Activated naive CD4-positive, alpha-beta T cell treated with anti-CD3 and anti-CD28 coated beads, Interleukin-2, amount 10 ng/mL, durations not matched to agents 7 days and 5 days (primary cell): ENCODE measurements at regions of chr9 and their contacts with region 1.

Region 1: GRCh38 chr9:21812946-21813568 is 10.6 kb downstream of the MTAP start:
- DNase-seq: peak; percentile 74
- H3K4me3 Mint-ChIP-seq: no peak overlapping the region
- H3K27ac Mint-ChIP-seq: peak overlapping the region; percentile 44
- H3K4me1 Mint-ChIP-seq: peaks cover 16% of the 10 kb centered on the region
- H3K27me3 Mint-ChIP-seq: no peaks in the 10 kb centered on the region

Region 2: GRCh38 chr9:21570643-21571275 is 242.3 kb before region 1 on chr9:
- CTCF ChIA-PET with region 1: no interaction called
- DNase-seq: no peak
- H3K4me3 Mint-ChIP-seq: no peak overlapping the region
- H3K27ac Mint-ChIP-seq: no peak overlapping the region
- H3K4me1 Mint-ChIP-seq: peaks cover under 1% of the 10 kb centered on the region
- H3K27me3 Mint-ChIP-seq: peaks cover 42% of the 10 kb centered on the region

Region 3: GRCh38 chr9:21789541-21790037 is 23.5 kb before region 1 on chr9:
- CTCF ChIA-PET with region 1: no interaction called
- DNase-seq: peak; percentile 71
- H3K4me3 Mint-ChIP-seq: peak overlapping the region; percentile 67
- H3K27ac Mint-ChIP-seq: no peak overlapping the region
- H3K4me1 Mint-ChIP-seq: peaks cover 5% of the 10 kb centered on the region
- H3K27me3 Mint-ChIP-seq: peaks cover 36% of the 10 kb centered on the region

Region 4: DNA sequence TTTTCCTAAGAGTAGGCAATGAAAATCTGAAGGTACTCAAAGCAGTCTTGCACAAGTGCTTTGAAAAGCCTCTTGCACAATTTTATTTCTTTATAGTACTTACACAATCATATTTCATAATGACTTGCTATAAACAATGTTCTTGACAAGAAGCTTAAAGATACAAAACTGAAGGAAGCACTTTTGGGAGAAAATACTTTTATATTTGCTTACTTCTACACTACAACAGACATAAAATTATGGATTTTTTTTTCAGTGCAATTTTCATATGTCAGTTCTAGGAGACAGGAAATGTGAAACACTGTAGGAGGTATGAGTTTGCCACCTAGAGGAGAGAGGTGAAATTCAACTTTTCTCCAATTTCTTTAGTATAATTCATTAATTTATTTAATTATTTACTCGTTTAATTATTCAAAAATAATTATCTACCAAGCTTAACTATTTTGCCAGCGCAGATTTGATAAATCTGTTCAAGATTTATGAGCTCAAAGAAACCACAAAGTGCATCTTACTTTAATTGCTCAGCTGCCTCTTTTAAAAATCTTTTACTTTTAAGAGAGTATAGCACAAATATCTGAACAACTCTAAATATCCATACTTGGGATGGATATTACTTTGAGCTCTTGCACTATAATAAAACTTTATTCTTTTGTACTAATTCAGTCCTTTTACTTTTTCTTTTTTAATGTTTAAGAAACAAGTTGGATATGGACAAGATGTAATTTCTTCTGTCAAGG is 225.1 kb after region 1 on chr9:
- CTCF ChIA-PET with region 1: interaction called, 59 read pairs
- DNase-seq: no peak
- H3K4me3 Mint-ChIP-seq: no peak overlapping the region
- H3K27ac Mint-ChIP-seq: no peak overlapping the region
- H3K4me1 Mint-ChIP-seq: peaks cover 62% of the 10 kb centered on the region
- H3K27me3 Mint-ChIP-seq: peaks cover 20% of the 10 kb centered on the region

Region 5: GRCh38 chr9:22238809-22239684 is 426.0 kb after region 1 on chr9:
- CTCF ChIA-PET with region 1: interaction called, 17 read pairs
- DNase-seq: no peak
- H3K4me3 Mint-ChIP-seq: no peak overlapping the region
- H3K27ac Mint-ChIP-seq: no peak overlapping the region
- H3K4me1 Mint-ChIP-seq: peaks cover 42% of the 10 kb centered on the region
- H3K27me3 Mint-ChIP-seq: peaks cover 28% of the 10 kb centered on the region